ENCODE measurements at regions of chr17 and their contacts with region 1.

Region 1: GRCh38 chr17:14926526-14927122 is 338.5 kb downstream of the PMP22 start:
- DNase-seq: peak; percentile 51
- H3K27ac ChIP-seq: no peak overlapping the region
- CTCF ChIP-seq: peak; percentile 78

Region 2: DNA sequence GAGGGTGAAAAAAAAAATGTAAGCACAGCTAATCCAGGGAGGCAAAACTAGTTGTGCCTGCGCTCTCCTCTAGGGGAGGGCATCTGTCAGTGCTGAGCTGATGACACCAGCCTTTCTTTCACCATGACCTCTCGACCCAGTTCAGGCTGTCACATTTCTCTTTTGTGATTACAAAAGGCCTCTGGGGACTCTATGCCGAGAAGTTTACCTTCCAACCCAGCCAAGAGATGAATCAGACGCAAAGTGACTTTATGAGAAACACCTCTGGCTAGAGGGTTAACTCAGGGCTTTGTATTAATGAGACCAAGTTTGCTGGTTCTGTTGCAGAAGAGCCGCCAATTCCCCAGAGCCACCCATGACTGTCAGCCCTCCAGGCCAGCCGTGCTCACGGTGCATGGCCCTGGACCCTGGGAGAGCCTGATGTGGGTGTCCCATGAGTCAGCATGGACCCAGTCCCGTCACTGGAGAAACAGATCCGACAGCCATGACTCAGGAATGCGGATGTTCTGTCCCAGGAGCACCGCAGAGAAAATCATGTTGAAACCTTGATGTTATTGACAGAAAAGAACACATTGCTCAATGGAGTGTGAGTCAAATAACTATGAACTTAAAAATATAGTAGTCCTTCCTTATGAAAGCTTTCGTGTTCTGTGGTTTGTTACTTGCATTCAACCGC is 188.5 kb before region 1 on chr17:
- CTCF ChIA-PET with region 1: interaction called, 10 read pairs
- POLR2A ChIA-PET with region 1: no interaction called
- DNase-seq: peak; percentile 99
- H3K27ac ChIP-seq: peak overlapping the region; percentile 96
- CTCF ChIP-seq: peak; percentile 58

Region 3: GRCh38 chr17:14942526-14943190 is 16.0 kb after region 1 on chr17:
- CTCF ChIA-PET with region 1: interaction called, 21 read pairs
- POLR2A ChIA-PET with region 1: no interaction called
- DNase-seq: peak; percentile 77
- H3K27ac ChIP-seq: no peak overlapping the region; the same call in 1 of the 2 replicates
- CTCF ChIP-seq: no peak

Region 4: GRCh38 chr17:14971054-14971453 is 44.4 kb after region 1 on chr17:
- CTCF ChIA-PET with region 1: no interaction called
- POLR2A ChIA-PET with region 1: no interaction called
- DNase-seq: no peak
- H3K27ac ChIP-seq: no peak overlapping the region
- CTCF ChIP-seq: no peak

Region 5: GRCh38 chr17:15000661-15001060 is 74.0 kb after region 1 on chr17:
- CTCF ChIA-PET with region 1: no interaction called
- POLR2A ChIA-PET with region 1: no interaction called
- DNase-seq: peak; percentile 15
- H3K27ac ChIP-seq: no peak overlapping the region
- CTCF ChIP-seq: no peak